ENCODE measurements at regions of chr15 and their contacts with region 1.

Region 1: DNA sequence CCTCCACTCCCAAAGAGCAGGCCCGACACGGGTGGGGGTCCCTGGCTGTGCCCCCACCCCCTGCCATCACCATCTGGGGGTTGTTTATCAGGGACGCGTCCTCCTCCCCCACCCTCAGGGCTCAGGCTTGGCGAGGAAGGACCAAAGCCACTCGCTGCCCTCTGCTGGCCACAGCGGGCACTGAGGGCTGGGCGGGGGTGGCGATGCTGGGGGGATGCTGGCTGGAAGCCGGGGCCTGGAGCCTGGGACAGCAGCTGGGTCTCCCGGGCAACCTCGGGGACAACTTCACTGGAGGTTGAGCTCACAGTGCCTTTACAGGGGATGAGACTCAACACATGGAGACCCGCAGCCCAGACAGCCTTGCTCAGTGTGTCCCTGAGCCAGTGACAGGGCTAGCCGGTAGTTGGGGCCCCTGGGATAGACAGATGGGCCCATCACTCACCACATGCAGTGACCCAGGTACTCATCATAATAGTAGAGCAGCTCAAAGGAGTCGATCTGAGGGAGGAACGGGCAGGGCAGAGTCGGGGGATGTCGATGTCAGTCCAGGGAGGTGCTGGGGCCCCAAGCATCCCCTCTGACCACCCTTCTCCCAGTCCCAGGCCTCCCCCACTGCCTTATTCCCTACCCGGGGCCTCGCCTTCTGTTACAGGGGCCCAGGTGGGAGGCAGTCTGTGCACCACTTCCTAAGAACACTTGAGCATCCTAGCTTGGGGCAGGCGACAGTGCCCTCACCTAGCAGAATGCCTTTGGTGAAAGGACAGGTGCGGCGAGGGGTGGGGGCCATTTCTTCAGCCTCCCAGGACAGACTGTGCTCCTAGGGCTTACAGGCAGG is 5.9 kb upstream of the CALML4 start:
- DNase-seq: peak; percentile 36
- H3K4me3 Mint-ChIP-seq: no peak overlapping the region
- H3K27ac Mint-ChIP-seq: peak overlapping the region; percentile 63
- H3K4me1 Mint-ChIP-seq: peaks cover 25% of the 10 kb centered on the region
- H3K27me3 Mint-ChIP-seq: no peaks in the 10 kb centered on the region

Region 2: DNA sequence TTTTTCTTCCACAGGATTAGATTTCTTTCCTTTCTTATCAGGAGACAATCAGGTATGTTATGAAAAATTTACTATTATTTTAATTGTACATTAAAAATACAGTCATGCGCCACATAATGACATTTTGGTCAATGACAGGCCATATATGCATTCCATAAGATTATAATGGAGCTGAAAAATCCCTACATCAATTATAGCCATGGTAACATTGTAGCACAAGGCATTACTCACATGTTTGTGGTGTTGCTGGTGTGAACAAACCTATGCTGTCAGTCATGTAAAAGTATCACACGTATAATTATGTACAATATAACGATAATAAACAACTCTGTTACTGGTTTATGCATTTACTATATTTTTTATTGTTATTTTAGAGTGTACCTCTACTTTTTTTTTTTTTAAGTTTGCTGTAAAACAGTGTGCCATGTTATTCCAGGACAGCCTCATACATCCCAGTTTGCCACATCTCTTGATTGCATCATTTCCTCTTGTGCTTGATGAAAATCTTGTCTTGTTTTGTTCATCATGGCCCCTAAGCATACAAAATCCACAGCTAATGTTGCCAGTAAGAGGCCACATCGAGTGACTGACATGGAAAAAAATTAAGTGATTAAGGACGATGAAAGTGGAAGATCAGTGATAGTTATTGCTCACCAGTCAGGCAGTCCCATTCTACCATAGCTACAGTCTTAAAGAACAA is 27.3 kb before region 1 on chr15:
- intact Hi-C with region 1: loop called (anchors 1 kb)
- DNase-seq: no peak
- H3K4me3 Mint-ChIP-seq: no peak overlapping the region
- H3K27ac Mint-ChIP-seq: no peak overlapping the region
- H3K4me1 Mint-ChIP-seq: peaks cover 7% of the 10 kb centered on the region
- H3K27me3 Mint-ChIP-seq: no peaks in the 10 kb centered on the region

Region 3: GRCh38 chr15:68983961-68984481 is 773.0 kb after region 1 on chr15:
- intact Hi-C with region 1: no loop called
- DNase-seq: no peak
- H3K4me3 Mint-ChIP-seq: no peak overlapping the region
- H3K27ac Mint-ChIP-seq: no peak overlapping the region
- H3K4me1 Mint-ChIP-seq: no peaks in the 10 kb centered on the region
- H3K27me3 Mint-ChIP-seq: peaks cover 1% of the 10 kb centered on the region

Measured in activated T-helper 2 cell treated with anti-CD3 and anti-CD28 coated beads, Interferon-gamma antibody, Interleukin-2, Interleukin-4, amounts not matched to agents 10 μg/mL and 5 μg/mL and 100 μg/mL, durations not matched to agents 14 hours and 24 hours and 36 hours (primary cell).